ENCODE measurements at regions of chr16 and their contacts with region 1.

Region 1: DNA sequence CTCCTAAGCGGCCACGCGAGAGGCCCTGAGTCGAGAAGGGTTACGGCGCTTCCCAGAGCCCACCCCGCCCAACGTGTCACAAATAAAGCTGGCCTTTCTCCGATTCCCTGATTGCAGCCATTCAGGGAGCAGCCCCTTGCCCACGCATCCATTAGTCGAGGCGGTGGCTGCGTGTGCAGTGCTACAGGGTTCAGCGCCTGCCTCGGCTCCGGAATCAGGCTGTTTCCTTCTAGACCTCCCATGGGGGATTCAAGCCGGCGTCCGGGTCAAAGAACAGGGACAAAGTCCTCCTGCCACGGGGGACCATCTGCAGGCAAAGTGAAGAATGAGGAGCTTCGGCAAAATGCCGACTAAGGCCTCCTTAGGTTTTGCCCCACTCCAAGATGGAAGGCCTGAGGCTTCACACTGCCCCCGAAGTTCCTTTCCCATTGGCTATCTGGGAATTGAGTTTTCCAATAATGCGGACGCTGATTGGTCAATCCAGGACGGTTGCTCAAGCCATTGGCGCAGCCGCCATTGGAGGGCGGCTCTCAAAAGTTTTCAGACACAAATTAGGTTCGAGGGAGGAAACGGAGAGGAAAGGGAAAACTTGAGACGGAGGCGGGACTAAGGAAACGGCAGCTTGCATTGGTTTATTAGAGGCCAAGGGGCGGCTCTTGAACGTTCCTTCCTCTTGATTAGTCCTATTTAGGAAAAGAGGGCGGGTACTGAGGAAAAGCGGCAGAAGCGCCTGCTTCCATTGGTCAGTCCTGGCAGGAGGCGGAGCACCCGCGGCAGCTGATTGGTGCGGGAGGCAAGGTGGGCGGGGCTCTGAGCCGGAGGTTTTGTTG is 430 bp upstream of the KATNB1 start:
- DNase-seq: peak; percentile 93 to 100 (median 98)
- ATAC-seq: peak; percentile 88
- H3K4me3 ChIP-seq: peak overlapping the region; percentile 84 to 99
- H3K4me3 Mint-ChIP-seq: peak overlapping the region; percentile 94
- H3K27ac ChIP-seq: peak overlapping the region; percentile 72 to 84
- H3K27ac Mint-ChIP-seq: peak overlapping the region; percentile 97
- H3K4me1 ChIP-seq: peaks cover 21% of the 10 kb centered on the region
- H3K4me1 Mint-ChIP-seq: peaks cover 30% of the 10 kb centered on the region
- H3K27me3 ChIP-seq: no peaks in the 10 kb centered on the region
- H3K27me3 Mint-ChIP-seq: no peaks in the 10 kb centered on the region
- CTCF ChIP-seq: no peak

Region 2: DNA sequence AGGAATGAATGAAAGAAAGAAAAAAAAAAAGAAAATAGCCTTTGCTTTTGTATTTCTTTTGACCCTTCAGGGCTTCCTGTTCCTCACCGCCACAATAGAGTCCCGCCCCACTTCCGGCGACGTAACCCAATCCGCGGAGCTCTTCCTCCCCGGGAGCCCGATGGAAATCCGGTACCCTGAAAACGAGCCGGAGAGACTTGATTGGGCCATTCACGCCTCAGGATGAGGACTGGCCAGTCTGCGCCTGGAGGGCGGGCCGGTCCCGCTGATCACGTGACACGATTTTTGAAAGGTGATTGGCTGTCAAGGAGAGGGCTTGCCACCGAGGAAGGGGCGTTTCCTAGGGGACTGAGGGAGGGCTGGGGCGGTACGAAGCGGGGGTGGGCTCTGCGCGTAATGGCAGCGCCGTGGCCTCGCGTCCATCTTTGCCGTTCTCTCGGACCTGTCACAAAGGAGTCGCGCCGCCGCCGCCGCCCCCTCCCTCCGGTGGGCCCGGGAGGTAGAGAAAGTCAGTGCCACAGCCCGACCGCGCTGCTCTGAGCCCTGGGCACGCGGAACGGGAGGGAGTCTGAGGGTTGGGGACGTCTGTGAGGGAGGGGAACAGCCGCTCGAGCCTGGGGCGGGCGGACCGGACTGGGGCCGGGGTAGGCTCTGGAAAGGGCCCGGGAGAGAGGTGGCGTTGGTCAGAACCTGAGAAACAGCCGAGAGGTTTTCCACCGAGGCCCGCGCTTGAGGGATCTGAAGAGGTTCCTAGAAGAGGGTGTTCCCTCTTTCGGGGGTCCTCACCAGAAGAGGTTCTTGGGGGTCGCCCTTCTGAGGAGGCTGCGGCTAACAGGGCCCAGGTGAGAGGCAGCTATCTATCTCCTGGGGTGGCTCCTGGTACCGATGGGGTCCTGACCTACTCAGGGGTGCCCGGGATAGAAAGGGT is 548.9 kb before region 1 on chr16 and contains the starts of genes PSME3IP1 and RSPRY1:
- CTCF ChIA-PET with region 1: interaction called, 3 read pairs
- POLR2A ChIA-PET with region 1: no interaction called
- intact Hi-C with region 1: loop called in 1 of 2 experiments (anchors 10 kb)
- DNase-seq: peak; percentile 96 to 100 (median 98)
- ATAC-seq: peak; percentile 82
- H3K4me3 ChIP-seq: peak within 1 kb of the TSS; percentile 92 to 100
- H3K4me3 Mint-ChIP-seq: peak within 1 kb of the TSS; percentile 99
- H3K27ac ChIP-seq: peak within 1 kb of the TSS; percentile 84 to 94
- H3K27ac Mint-ChIP-seq: peak within 1 kb of the TSS; percentile 98
- H3K4me1 ChIP-seq: peaks cover 34% of the 10 kb centered on the region
- H3K4me1 Mint-ChIP-seq: peaks cover 58% of the 10 kb centered on the region
- H3K27me3 ChIP-seq: no peaks in the 10 kb centered on the region
- H3K27me3 Mint-ChIP-seq: no peaks in the 10 kb centered on the region
- CTCF ChIP-seq: no peak
- total RNA-seq, gene PSME3IP1: 82.6 to 87.2 TPM
- total RNA-seq, gene RSPRY1: 22.4 to 23.2 TPM

Region 3: DNA sequence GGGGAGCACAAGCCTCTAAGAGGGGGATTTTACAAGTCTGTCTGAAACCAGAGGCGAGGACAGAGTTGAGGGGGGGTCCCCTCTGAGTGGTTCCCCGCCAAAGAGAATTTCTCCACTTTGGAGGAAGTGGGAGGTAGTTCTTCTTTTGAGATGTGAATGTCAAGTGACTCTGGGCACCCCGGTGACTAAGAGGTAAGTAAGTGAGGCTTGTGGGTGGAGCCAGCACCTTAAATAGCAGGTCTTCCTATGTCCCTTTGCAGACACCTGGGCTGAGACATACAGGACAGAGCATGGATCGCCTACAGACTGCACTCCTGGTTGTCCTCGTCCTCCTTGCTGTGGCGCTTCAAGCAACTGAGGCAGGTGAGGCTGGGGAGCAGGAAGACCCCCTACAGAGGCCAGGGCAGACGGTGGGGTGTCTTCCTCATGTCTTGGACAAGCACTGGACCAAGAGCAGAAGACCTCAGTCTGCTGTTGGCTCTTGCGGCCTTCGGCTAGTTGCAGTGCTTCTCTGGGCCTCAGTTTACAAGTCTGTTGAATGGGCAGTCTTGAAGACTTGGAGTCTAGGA is 376.5 kb before region 1 on chr16 and contains the start of gene CCL22:
- CTCF ChIA-PET with region 1: no interaction called
- POLR2A ChIA-PET with region 1: no interaction called
- intact Hi-C with region 1: no loop called
- DNase-seq: peak in 1 of 9 experiments; percentile 18
- ATAC-seq: no peak
- H3K4me3 ChIP-seq: no peak within 1 kb of the TSS
- H3K4me3 Mint-ChIP-seq: no peak within 1 kb of the TSS
- H3K27ac ChIP-seq: no peak within 1 kb of the TSS
- H3K27ac Mint-ChIP-seq: no peak within 1 kb of the TSS
- H3K4me1 ChIP-seq: no peaks in the 10 kb centered on the region
- H3K4me1 Mint-ChIP-seq: no peaks in the 10 kb centered on the region
- H3K27me3 ChIP-seq: no peaks in the 10 kb centered on the region
- H3K27me3 Mint-ChIP-seq: no peaks in the 10 kb centered on the region
- CTCF ChIP-seq: no peak
- total RNA-seq, gene CCL22: not detected

Region 4: GRCh38 chr16:57535680-57536305 is 199.3 kb before region 1 on chr16:
- CTCF ChIA-PET with region 1: no interaction called
- POLR2A ChIA-PET with region 1: interaction called, 3 read pairs
- intact Hi-C with region 1: loop called (anchors 2 to 5 kb)
- DNase-seq: peak; percentile 83 to 97 (median 92)
- ATAC-seq: peak; percentile 82
- H3K4me3 ChIP-seq: peak overlapping the region; percentile 69 to 80
- H3K4me3 Mint-ChIP-seq: peak overlapping the region; percentile 81
- H3K27ac ChIP-seq: peak overlapping the region; percentile 64 to 96
- H3K27ac Mint-ChIP-seq: peak overlapping the region; percentile 96
- H3K4me1 ChIP-seq: peaks cover 81% of the 10 kb centered on the region
- H3K4me1 Mint-ChIP-seq: peaks cover 70% of the 10 kb centered on the region
- H3K27me3 ChIP-seq: no peaks in the 10 kb centered on the region
- H3K27me3 Mint-ChIP-seq: no peaks in the 10 kb centered on the region
- CTCF ChIP-seq: no peak

Region 5: GRCh38 chr16:57689762-57690558 is 45.2 kb before region 1 on chr16:
- CTCF ChIA-PET with region 1: no interaction called
- POLR2A ChIA-PET with region 1: interaction called, 5 read pairs
- intact Hi-C with region 1: loop called in 1 of 2 experiments (anchors 1 kb)
- DNase-seq: peak; percentile 12 to 88 (median 57)
- ATAC-seq: peak; percentile 95
- H3K4me3 ChIP-seq: peak overlapping the region in 1 of 2 experiments; percentile 21
- H3K4me3 Mint-ChIP-seq: peak overlapping the region; percentile 62
- H3K27ac ChIP-seq: peak overlapping the region; percentile 44 to 64
- H3K27ac Mint-ChIP-seq: peak overlapping the region; percentile 92
- H3K4me1 ChIP-seq: peaks cover 26% of the 10 kb centered on the region
- H3K4me1 Mint-ChIP-seq: peaks cover 24% of the 10 kb centered on the region
- H3K27me3 ChIP-seq: no peaks in the 10 kb centered on the region
- H3K27me3 Mint-ChIP-seq: no peaks in the 10 kb centered on the region
- CTCF ChIP-seq: no peak

Region 6: GRCh38 chr16:57984331-57985203 is 249.4 kb after region 1 on chr16:
- CTCF ChIA-PET with region 1: no interaction called
- POLR2A ChIA-PET with region 1: no interaction called
- intact Hi-C with region 1: loop called (anchors 1 to 5 kb)
- DNase-seq: peak; percentile 81 to 96 (median 90)
- ATAC-seq: peak; percentile 96
- H3K4me3 ChIP-seq: peak overlapping the region; percentile 64 to 83
- H3K4me3 Mint-ChIP-seq: peak overlapping the region; percentile 88
- H3K27ac ChIP-seq: peak overlapping the region in 1 of 2 experiments; percentile 36
- H3K27ac Mint-ChIP-seq: peak overlapping the region; percentile 37
- H3K4me1 ChIP-seq: peaks cover 12% of the 10 kb centered on the region
- H3K4me1 Mint-ChIP-seq: peaks cover 16% of the 10 kb centered on the region
- H3K27me3 ChIP-seq: no peaks in the 10 kb centered on the region
- H3K27me3 Mint-ChIP-seq: no peaks in the 10 kb centered on the region
- CTCF ChIP-seq: no peak

Region 7: DNA sequence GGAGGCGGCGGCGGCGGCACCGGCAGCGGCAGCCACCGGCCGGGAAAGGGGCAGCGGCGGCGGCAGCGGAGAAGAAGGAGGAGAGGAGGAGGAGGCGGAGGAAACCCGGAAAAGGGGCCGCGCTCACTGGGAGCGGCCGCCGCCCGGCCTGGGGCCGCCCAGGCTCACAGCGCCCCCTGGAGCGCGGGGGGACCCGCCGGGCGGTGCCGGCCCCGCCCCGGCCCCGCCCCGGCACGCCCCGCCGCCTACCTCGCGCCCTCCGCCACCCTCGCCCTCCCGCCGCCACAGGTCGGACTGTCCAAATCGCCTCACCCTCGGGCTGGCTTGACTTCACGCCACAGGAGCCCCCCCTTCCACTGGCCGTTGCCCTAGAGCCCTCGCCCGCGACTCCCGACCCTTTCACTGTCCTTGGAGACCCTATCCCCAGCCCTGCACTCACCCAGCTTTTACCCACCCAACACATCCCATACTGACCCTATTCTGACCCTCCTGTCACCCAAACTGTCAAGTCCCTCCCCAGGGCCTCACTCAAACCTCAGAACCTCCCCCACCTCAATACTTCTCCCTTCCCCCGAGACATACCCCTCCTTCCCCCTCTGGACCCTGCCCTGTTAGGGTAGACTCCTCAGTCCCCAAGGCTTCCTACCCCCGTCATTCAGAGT is 463.0 kb after region 1 on chr16 and contains the start of gene CSNK2A2:
- CTCF ChIA-PET with region 1: no interaction called
- POLR2A ChIA-PET with region 1: no interaction called
- intact Hi-C with region 1: loop called in 1 of 2 experiments (anchors 10 kb)
- DNase-seq: peak; percentile 42 to 87 (median 69)
- ATAC-seq: peak; percentile 94
- H3K4me3 ChIP-seq: peak within 1 kb of the TSS; percentile 56 to 67
- H3K4me3 Mint-ChIP-seq: peak within 1 kb of the TSS; percentile 89
- H3K27ac ChIP-seq: no peak within 1 kb of the TSS
- H3K27ac Mint-ChIP-seq: peak within 1 kb of the TSS; percentile 88
- H3K4me1 ChIP-seq: peaks cover 26% of the 10 kb centered on the region
- H3K4me1 Mint-ChIP-seq: peaks cover 39% of the 10 kb centered on the region
- H3K27me3 ChIP-seq: no peaks in the 10 kb centered on the region
- H3K27me3 Mint-ChIP-seq: peaks cover 7% of the 10 kb centered on the region
- CTCF ChIP-seq: no peak
- total RNA-seq, gene CSNK2A2: 53.3 to 58.4 TPM

Measured in CD8-positive, alpha-beta T cell (primary cell).